ENCODE measurements at regions of chr14 and their contacts with region 1.

Region 1: DNA sequence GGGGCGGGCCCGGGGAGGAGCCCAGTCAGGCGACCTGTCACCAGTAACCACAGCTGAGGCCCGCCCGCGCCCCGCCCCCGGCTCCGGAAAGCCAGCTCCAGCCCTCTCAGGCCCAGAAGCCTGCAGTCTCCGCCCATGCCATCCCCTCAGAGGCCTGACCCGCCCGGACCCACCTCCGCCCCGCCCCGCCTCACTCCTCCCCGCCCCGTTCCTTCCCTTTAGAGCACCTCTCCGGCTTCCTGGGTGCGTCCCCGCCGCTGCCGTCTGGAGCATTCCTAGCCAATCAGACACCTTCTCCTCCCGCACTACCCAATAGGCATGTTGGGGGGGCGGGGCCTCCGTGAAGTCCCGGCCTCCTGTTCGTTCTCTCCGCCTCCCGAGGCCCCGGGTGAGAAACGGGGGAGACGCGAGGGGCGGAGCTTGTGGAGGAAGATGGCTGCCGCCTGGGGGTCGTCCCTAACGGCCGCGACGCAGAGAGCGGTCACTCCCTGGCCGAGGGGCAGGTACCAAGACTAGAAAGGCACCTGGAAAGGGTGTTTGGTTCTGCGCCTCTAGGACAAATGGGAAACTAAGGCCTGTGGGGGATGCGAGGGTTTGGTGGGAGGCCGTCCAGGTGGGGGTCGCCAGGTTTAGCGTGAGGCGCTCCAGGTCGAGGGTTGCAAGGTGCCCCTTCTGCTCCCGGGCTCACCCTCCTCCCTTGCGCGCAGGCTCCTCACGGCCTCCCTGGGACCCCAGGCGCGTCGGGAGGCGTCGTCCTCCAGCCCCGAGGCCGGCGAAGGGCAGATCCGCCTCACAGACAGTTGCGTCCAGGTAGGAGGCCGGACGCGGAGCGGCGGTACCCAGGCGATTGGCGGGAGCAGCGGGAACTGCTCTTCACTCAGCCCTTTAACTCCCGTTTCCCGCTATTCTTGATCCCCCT is at the start of gene ISCA2:
- DNase-seq: peak; percentile 97 to 100 (median 99)
- ATAC-seq: peak; percentile 91
- H3K4me3 ChIP-seq: peak within 1 kb of the TSS; percentile 78 to 90
- H3K4me3 Mint-ChIP-seq: no peak within 1 kb of the TSS
- H3K27ac ChIP-seq: peak within 1 kb of the TSS; percentile 80 to 81
- H3K27ac Mint-ChIP-seq: peak within 1 kb of the TSS; percentile 92
- H3K4me1 ChIP-seq: peaks cover 32% of the 10 kb centered on the region
- H3K4me1 Mint-ChIP-seq: peaks cover 33% of the 10 kb centered on the region
- H3K27me3 ChIP-seq: no peaks in the 10 kb centered on the region
- H3K27me3 Mint-ChIP-seq: no peaks in the 10 kb centered on the region
- CTCF ChIP-seq: no peak
- total RNA-seq, gene ISCA2: 18.6 to 24.0 TPM

Region 2: GRCh38 chr14:74302634-74303577 is 190.7 kb before region 1 on chr14 and contains the start of gene ABCD4:
- CTCF ChIA-PET with region 1: no interaction called
- POLR2A ChIA-PET with region 1: interaction called, 4 read pairs
- intact Hi-C with region 1: loop called (anchors 2 to 5 kb)
- DNase-seq: peak; percentile 69 to 90 (median 86)
- ATAC-seq: peak; percentile 87
- H3K4me3 ChIP-seq: peak within 1 kb of the TSS; percentile 69 to 85
- H3K4me3 Mint-ChIP-seq: peak within 1 kb of the TSS; percentile 100
- H3K27ac ChIP-seq: peak within 1 kb of the TSS; percentile 78 to 85
- H3K27ac Mint-ChIP-seq: peak within 1 kb of the TSS; percentile 98
- H3K4me1 ChIP-seq: peaks cover 19% of the 10 kb centered on the region
- H3K4me1 Mint-ChIP-seq: peaks cover 28% of the 10 kb centered on the region
- H3K27me3 ChIP-seq: no peaks in the 10 kb centered on the region
- H3K27me3 Mint-ChIP-seq: no peaks in the 10 kb centered on the region
- CTCF ChIP-seq: peak; percentile 18
- total RNA-seq, gene ABCD4: 67.5 to 76.9 TPM

Region 3: DNA sequence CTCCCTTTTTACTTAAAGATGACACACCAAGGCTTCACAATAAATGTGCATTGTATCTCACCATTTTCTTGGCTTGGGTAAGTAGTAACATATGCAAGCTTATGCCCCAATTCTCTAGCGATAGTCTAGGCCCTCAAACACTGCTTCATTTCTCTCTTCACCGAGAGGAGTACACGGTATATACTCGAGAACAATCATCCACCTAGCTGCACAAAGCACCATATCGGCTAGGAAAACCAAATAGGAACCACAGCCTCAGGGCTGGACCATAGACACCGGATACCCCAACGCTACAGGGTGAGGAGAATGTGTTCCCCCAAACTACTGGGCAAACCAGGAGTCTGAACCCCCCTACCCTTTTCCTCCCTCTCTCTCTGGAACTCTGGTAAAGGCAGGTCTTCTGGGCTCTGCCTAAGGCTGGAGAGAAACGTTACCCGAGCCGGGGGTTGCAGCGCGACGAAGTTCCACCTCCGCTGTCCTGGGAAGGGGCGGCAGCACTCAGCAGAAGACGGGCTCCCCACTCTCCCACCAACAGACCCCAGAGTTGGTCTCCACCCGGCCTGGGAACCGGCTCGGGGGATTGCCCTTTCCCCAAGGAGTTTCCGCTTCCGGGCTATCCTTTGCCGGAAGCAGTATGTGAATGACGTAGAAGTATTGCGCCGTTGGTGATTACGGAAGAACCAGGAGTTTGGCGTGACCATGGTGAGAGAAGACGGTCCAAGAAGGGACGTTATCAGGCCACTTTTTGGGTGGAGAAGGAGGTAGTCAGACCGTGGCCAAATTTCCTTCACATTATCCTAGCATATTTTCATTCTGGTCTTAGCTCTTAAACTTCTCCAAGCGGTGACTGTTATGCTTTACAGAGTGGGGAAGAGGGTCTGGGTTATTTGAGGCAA is 219.1 kb after region 1 on chr14 and contains the starts of genes AREL1 and FCF1:
- CTCF ChIA-PET with region 1: no interaction called
- POLR2A ChIA-PET with region 1: no interaction called
- intact Hi-C with region 1: loop called (anchors 5 to 10 kb)
- DNase-seq: peak; percentile 56 to 94 (median 80)
- ATAC-seq: peak; percentile 93
- H3K4me3 ChIP-seq: peak within 1 kb of the TSS; percentile 63 to 87
- H3K4me3 Mint-ChIP-seq: peak within 1 kb of the TSS; percentile 98
- H3K27ac ChIP-seq: peak within 1 kb of the TSS; percentile 78 to 93
- H3K27ac Mint-ChIP-seq: peak within 1 kb of the TSS; percentile 99
- H3K4me1 ChIP-seq: peaks cover 24% of the 10 kb centered on the region
- H3K4me1 Mint-ChIP-seq: peaks cover 65% of the 10 kb centered on the region
- H3K27me3 ChIP-seq: no peaks in the 10 kb centered on the region
- H3K27me3 Mint-ChIP-seq: no peaks in the 10 kb centered on the region
- CTCF ChIP-seq: no peak
- total RNA-seq, gene AREL1: 44.5 to 60.1 TPM
- total RNA-seq, gene FCF1: 32.6 to 34.0 TPM

Region 4: GRCh38 chr14:74881431-74882361 is 388.1 kb after region 1 on chr14 and contains the start of gene DLST:
- CTCF ChIA-PET with region 1: no interaction called
- POLR2A ChIA-PET with region 1: no interaction called
- intact Hi-C with region 1: loop called in 1 of 2 experiments (anchors 5 kb)
- DNase-seq: peak; percentile 74 to 92 (median 85)
- ATAC-seq: peak; percentile 76
- H3K4me3 ChIP-seq: peak within 1 kb of the TSS; percentile 62 to 80
- H3K4me3 Mint-ChIP-seq: peak within 1 kb of the TSS; percentile 99
- H3K27ac ChIP-seq: peak within 1 kb of the TSS; percentile 82 to 90
- H3K27ac Mint-ChIP-seq: peak within 1 kb of the TSS; percentile 100
- H3K4me1 ChIP-seq: peaks cover 44% of the 10 kb centered on the region
- H3K4me1 Mint-ChIP-seq: peaks cover 62% of the 10 kb centered on the region
- H3K27me3 ChIP-seq: no peaks in the 10 kb centered on the region
- H3K27me3 Mint-ChIP-seq: no peaks in the 10 kb centered on the region
- CTCF ChIP-seq: no peak
- total RNA-seq, gene DLST: 142 to 156 TPM

Region 5: GRCh38 chr14:75660630-75661494 is 1167.3 kb after region 1 on chr14 and contains the starts of genes ERG28 and TTLL5:
- CTCF ChIA-PET with region 1: no interaction called
- POLR2A ChIA-PET with region 1: no interaction called
- intact Hi-C with region 1: loop called (anchors 5 kb)
- DNase-seq: peak; percentile 94 to 99 (median 95)
- ATAC-seq: peak; percentile 93
- H3K4me3 ChIP-seq: peak within 1 kb of the TSS; percentile 86 to 87
- H3K4me3 Mint-ChIP-seq: peak within 1 kb of the TSS; percentile 98
- H3K27ac ChIP-seq: peak within 1 kb of the TSS; percentile 85 to 93
- H3K27ac Mint-ChIP-seq: peak within 1 kb of the TSS; percentile 97
- H3K4me1 ChIP-seq: peaks cover 10% of the 10 kb centered on the region
- H3K4me1 Mint-ChIP-seq: peaks cover 36% of the 10 kb centered on the region
- H3K27me3 ChIP-seq: no peaks in the 10 kb centered on the region
- H3K27me3 Mint-ChIP-seq: no peaks in the 10 kb centered on the region
- CTCF ChIP-seq: no peak
- total RNA-seq, gene ERG28: 6.6 to 6.7 TPM
- total RNA-seq, gene TTLL5: 17.6 to 17.7 TPM